H1 (cell line): ENCODE measurements at regions of chr17 and their contacts with region 1.

Region 1: DNA sequence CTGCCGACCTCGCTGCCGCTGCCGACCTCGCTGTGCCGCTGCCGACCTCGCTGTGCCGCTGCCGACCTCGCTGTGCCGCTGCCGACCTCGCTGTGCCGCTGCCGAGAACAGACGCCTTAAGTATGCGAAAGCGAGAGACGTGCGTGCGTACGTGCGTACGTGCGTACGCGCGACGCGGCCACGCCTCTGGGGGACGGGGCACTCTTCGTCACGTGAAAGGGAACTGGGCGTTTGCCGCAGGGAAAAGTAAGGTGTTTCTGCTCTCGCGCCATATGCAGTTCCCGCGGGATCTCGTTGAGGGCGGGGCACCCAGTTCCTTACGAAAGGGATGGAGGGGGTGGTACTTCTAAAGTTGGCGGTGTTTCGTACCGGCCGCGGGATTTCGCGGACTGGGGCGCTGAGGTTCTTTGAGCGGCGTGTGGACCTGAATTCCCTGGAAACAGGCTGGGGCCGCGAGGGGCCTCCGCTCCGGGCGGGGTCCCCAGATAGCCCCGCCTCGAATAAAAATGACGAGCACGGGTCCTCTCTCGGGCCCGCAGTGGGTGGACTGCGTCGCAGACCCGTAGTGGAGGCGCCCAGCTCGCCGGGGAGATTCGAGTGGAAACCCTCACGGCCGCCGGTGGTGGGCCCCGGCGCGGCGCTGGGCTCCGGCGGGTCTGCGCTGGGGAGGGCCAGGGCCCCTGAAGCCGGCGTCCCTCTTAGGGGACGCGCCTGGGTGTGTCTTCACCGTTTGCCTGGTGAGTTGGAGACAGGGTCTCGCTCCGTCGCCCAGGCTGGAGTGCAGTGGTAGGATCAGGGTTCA is at the start of gene EIF4A3:
- DNase-seq: peak; percentile 97 to 98
- H3K4me3 ChIP-seq: peak within 1 kb of the TSS; percentile 84 to 95 (median 88)
- H3K27ac ChIP-seq: peak within 1 kb of the TSS; percentile 83
- H3K4me1 ChIP-seq: peaks cover 2 to 20% (median 6%) of the 10 kb centered on the region in 4 experiments
- H3K27me3 ChIP-seq: no peaks in the 10 kb centered on the region; a peak in 2 of 7 replicates
- CTCF ChIP-seq: peak in 1 of 3 experiments; percentile 10; a peak in 1 of 4 replicates
- EP300 ChIP-seq: no peak
- POLR2A ChIP-seq: peak; percentile 55 to 74
- RAD21 ChIP-seq: peak; percentile 14 to 24; a peak in 2 of 4 replicates
- total RNA-seq, gene EIF4A3: 146 and 155 TPM in 2 replicates

Region 2: DNA sequence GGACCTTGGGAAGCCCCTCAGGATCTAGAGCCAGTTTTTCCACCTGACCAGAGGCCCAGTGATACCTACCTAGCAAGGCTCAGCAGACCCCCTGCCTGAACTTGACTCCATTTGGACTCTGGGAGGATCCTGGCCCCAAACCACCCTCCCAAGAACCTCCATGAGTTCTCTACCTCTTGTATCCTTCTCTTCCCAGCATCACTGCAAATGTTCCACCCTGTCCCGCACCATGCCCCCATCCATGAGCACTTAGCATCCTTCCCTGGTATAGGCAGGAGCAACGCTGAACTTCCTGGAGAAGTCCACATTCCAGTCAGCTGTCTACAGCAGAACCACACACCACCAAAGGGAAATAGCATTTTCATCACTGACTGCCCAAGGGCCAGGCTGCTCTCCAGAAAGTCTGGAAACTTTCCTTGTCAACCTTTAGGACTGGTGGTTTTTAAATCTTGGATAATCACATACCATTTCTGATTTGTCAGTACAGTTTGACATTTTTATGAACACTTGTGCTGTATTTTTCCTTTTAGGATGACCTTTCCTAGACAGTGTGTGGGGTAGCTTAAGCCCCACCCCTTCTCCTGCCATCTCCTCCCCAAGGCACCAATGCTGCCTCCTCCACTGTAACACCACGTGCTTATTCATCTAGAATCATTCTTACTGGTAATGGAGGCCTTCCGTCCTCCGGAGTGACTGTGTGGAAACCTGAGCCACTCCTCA is 14.2 kb before region 1 on chr17:
- CTCF ChIA-PET with region 1: interaction called, 3 read pairs
- POLR2A ChIA-PET with region 1: interaction called, 103 read pairs
- DNase-seq: no peak
- H3K4me3 ChIP-seq: no peak overlapping the region
- H3K27ac ChIP-seq: no peak overlapping the region
- H3K4me1 ChIP-seq: peaks cover 0 to 3% (median 1%) of the 10 kb centered on the region in 4 experiments; a peak in 3 of 7 replicates
- H3K27me3 ChIP-seq: no peaks in the 10 kb centered on the region
- CTCF ChIP-seq: no peak
- EP300 ChIP-seq: no peak
- POLR2A ChIP-seq: no peak; a peak in 1 of 3 replicates
- RAD21 ChIP-seq: no peak

Region 3: GRCh38 chr17:80160536-80160935 is 13.3 kb after region 1 on chr17:
- CTCF ChIA-PET with region 1: interaction called, 5 read pairs
- POLR2A ChIA-PET with region 1: interaction called, 17 read pairs
- DNase-seq: no peak
- H3K4me3 ChIP-seq: peak overlapping the region in 1 of 4 experiments; percentile 42; a peak in 2 of 8 replicates
- H3K27ac ChIP-seq: no peak overlapping the region
- H3K4me1 ChIP-seq: peaks cover 5 to 13% (median 7%) of the 10 kb centered on the region in 4 experiments
- H3K27me3 ChIP-seq: no peaks in the 10 kb centered on the region; a peak in 1 of 7 replicates
- CTCF ChIP-seq: no peak
- EP300 ChIP-seq: no peak
- POLR2A ChIP-seq: no peak
- RAD21 ChIP-seq: no peak